Gastrocnemius medialis (tissue), 4 donors: ENCODE measurements at regions of chr5 and their contacts with region 1.

Region 1: DNA sequence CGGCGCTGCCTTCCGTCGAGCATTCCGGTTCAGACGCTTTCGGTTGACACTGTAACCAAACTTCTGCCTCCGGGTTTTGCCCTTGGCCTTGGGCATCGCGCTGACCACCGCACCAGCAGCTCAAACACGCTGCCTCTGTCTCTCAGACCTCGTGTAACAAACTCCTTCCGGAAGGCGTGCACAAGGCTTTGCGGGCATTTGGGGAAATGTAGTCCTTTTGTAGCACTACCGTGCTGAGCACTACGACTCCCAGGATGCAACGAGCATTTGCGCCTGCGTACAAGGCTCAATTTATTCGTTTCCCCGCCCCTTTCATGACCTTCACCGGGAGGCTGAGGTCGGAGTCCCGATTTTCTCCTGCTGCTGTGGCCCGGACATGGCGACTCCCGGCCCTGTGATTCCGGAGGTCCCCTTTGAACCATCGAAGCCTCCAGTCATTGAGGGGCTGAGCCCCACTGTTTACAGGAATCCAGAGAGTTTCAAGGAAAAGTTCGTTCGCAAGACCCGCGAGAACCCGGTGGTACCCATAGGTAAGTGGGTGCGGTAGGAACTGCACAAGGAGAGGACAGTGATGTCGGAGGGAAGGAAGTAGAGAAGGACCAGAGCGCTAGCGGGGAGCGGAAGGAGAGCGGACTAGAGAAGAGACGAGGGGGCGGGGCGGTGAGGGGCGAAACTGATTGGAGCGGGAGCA is at the starts of genes HIGD2A and NOP16:
- DNase-seq: peak; percentile 99
- ATAC-seq: peak; percentile 91 to 92
- H3K4me3 ChIP-seq: peak within 1 kb of the TSS; percentile 76 to 95 (median 86)
- H3K27ac ChIP-seq: peak within 1 kb of the TSS; percentile 92 to 98 (median 96)
- H3K4me1 ChIP-seq: peaks cover 31 to 35% of the 10 kb centered on the region in 2 donors
- H3K27me3 ChIP-seq: no peaks in the 10 kb centered on the region
- CTCF ChIP-seq: peak in 2 of 5 experiments; percentile 6 to 21
- POLR2A ChIP-seq: peak; percentile 92 to 93
- total RNA-seq, gene HIGD2A: 189 to 274 (median 229) TPM
- total RNA-seq, gene NOP16: 21.6 to 43.5 (median 33.9) TPM

Region 2: DNA sequence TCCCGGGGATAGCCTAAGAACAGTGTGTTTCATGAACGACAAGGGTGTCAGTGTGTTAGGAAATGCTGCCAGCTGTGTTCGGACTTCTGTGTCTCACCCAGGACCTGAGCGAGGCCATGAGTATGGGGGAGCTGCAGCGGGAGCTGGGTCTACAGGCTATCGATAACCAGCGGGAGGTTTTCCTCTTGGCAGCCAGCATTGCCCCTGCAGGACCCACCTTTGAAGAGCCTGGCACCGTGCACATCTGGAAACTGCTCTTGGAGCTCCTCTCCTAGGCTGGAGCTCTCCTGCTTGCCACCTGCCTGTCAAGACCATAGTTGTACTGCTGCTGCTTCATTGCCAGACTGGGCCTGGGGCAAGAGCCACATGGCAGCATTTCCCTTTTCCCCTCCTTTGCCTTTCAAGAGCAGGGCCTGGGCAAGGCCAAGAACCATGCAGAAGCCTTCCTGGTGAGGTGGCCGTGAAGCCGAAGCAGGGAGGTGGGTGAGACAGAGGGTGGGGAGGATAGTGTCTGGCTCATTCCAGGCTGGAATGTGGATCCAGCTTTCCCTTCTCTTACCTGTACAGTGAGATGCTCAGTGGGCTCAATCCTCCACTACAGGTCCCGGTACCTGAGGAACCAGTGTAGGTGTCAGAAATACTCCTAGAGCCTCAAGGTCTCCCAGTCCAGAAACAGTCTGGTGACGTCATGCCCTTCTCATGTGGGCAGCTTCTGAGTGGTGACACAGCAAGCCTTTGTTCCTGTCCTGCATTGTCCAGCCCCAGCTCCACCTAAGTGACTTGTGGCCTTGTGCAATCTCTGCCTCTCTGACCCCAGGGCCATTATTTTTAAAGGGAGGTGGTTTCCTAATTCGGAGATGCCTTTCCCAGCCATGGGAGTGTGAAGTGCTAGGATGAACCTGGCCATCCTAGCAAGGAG is 16.7 kb before region 1 on chr5:
- in situ Hi-C with region 1: no loop called
- intact Hi-C with region 1: loop called (anchors 2 kb)
- DNase-seq: peak; percentile 78 to 94
- ATAC-seq: peak; percentile 48 to 55
- H3K4me3 ChIP-seq: peak overlapping the region in 1 of 4 donors; percentile 5
- H3K27ac ChIP-seq: peak overlapping the region; percentile 95 to 97 (median 96)
- H3K4me1 ChIP-seq: peaks cover 52 to 59% of the 10 kb centered on the region in 2 donors
- H3K27me3 ChIP-seq: no peaks in the 10 kb centered on the region
- CTCF ChIP-seq: no peak
- POLR2A ChIP-seq: peak; percentile 31 to 44

Region 3: DNA sequence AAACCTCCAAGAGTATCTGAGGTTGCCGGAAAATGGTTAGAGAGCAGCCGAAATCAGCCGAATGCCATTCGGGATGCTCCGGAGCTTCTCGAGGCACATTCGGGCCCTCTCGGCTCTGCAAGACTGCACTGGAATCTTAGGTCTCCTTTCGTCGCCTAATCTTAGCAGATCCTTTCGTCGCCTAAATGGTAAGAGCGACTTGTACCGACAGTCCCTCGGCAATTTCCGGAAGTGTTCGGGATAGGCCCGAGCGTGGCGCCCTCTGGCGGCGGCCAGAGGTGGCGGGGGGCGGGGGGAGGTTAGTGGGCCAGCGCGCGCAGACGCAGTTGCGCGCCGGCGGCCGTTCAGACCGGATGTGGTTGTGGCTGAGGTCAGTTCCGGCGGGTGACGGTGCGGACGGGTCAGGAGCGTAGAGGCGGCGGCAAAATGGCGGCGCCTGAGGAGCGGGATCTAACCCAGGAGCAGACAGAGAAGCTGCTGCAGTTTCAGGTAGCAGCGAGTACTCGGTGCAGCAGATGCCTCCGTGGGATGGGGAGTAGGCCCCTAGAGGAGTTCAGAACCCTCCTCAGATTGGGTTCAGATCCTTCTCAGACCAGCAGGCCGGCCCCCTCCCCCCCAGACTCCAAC is 59.5 kb after region 1 on chr5 and contains the start of gene FAF2:
- in situ Hi-C with region 1: no loop called
- intact Hi-C with region 1: loop called (anchors 1 kb)
- DNase-seq: peak; percentile 94 to 96
- ATAC-seq: peak; percentile 98 to 99
- H3K4me3 ChIP-seq: peak within 1 kb of the TSS; percentile 84 to 99 (median 94)
- H3K27ac ChIP-seq: peak within 1 kb of the TSS; percentile 91 to 97 (median 96)
- H3K4me1 ChIP-seq: peaks cover 36 to 39% of the 10 kb centered on the region in 2 donors
- H3K27me3 ChIP-seq: no peaks in the 10 kb centered on the region
- CTCF ChIP-seq: peak; percentile 87 to 99 (median 99)
- POLR2A ChIP-seq: peak; percentile 91 to 95
- total RNA-seq, gene FAF2: 14.0 to 20.7 (median 14.7) TPM

Region 4: GRCh38 chr5:176647030-176647866 is 258.7 kb after region 1 on chr5 and contains the start of gene TSPAN17:
- in situ Hi-C with region 1: no loop called
- intact Hi-C with region 1: loop called (anchors 10 kb)
- DNase-seq: peak; percentile 100
- ATAC-seq: peak; percentile 95 to 96
- H3K4me3 ChIP-seq: peak within 1 kb of the TSS; percentile 74 to 87 (median 80)
- H3K27ac ChIP-seq: peak within 1 kb of the TSS; percentile 77 to 85 (median 83)
- H3K4me1 ChIP-seq: peaks cover 12 to 17% of the 10 kb centered on the region in 2 donors
- H3K27me3 ChIP-seq: no peaks in the 10 kb centered on the region
- CTCF ChIP-seq: peak in 4 of 5 experiments; percentile 25 to 58 (median 48)
- POLR2A ChIP-seq: peak; percentile 65 to 67
- total RNA-seq, gene TSPAN17: 13.3 to 35.7 (median 27.2) TPM

Region 5: GRCh38 chr5:177546258-177546741 is 1157.7 kb after region 1 on chr5:
- in situ Hi-C with region 1: no loop called
- intact Hi-C with region 1: loop called (anchors 10 kb)
- DNase-seq: peak; percentile 52 to 81
- ATAC-seq: peak; percentile 68 to 77
- H3K4me3 ChIP-seq: peak overlapping the region in 2 of 4 donors; percentile 10 to 35
- H3K27ac ChIP-seq: peak overlapping the region; percentile 94 to 96 (median 95)
- H3K4me1 ChIP-seq: peaks cover 66 to 79% of the 10 kb centered on the region in 2 donors
- H3K27me3 ChIP-seq: no peaks in the 10 kb centered on the region
- CTCF ChIP-seq: no peak
- POLR2A ChIP-seq: peak in 1 of 2 donors; percentile 20

Region 6: DNA sequence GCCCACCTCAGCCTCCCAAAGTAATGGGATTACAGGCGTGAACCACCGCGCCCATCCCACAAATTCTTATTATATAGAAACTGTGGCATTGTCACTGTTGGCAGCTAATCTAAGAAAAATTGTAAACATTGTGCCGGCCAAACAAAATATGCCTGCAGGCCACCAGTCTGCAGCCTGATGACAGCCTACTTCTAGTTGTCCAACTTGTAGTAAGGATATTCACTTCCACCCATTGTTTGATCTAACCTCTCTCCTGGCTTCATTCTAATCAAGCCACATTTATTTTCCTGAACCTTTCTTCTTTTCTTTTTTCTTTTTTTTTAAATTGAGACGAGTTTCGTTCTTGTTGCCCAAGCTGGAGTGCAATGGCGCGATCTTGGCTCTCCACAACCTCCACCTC is 1189.7 kb after region 1 on chr5:
- in situ Hi-C with region 1: no loop called
- intact Hi-C with region 1: no loop called
- DNase-seq: no peak
- ATAC-seq: no peak
- H3K4me3 ChIP-seq: no peak overlapping the region
- H3K27ac ChIP-seq: no peak overlapping the region
- H3K4me1 ChIP-seq: no peaks in the 10 kb centered on the region
- H3K27me3 ChIP-seq: no peaks in the 10 kb centered on the region
- CTCF ChIP-seq: no peak
- POLR2A ChIP-seq: no peak